PC-3 (cell line): ENCODE measurements at regions of chr14 and their contacts with region 1.

Region 1: GRCh38 chr14:55707365-55707804 is 127.4 kb downstream of the KTN1 start:
- DNase-seq: peak; percentile 91
- ATAC-seq: peak; percentile 72
- H3K4me3 ChIP-seq: no peak overlapping the region
- H3K27ac ChIP-seq: no peak overlapping the region
- H3K4me1 ChIP-seq: peaks cover 19% of the 10 kb centered on the region
- H3K27me3 ChIP-seq: no peaks in the 10 kb centered on the region
- CTCF ChIP-seq: peak; percentile 99

Region 2: DNA sequence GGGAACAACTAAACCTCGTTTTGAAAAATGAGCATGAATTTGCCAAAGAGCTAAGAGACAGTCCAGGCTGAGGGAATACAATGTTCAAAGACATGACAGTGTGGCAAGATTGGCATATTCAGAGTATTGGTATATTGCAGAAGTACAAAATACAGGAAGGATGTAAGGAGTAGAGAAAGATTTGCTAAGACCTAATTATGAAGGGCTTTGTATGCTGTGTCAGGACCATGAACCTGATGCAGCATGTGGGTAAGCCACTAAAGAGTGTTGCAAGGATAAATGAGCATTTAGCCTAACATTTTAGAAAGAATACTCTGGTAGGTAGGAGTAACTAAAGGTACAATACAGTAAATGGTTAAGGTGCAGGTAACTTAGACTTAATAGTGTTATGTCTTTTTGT is 62.2 kb before region 1 on chr14:
- CTCF ChIA-PET with region 1: no interaction called
- POLR2A ChIA-PET with region 1: no interaction called
- intact Hi-C with region 1: no loop called
- DNase-seq: no peak
- ATAC-seq: no peak
- H3K4me3 ChIP-seq: no peak overlapping the region
- H3K27ac ChIP-seq: no peak overlapping the region
- H3K4me1 ChIP-seq: no peaks in the 10 kb centered on the region
- H3K27me3 ChIP-seq: no peaks in the 10 kb centered on the region
- CTCF ChIP-seq: no peak

Region 3: GRCh38 chr14:55731881-55732498 is 24.6 kb after region 1 on chr14:
- CTCF ChIA-PET with region 1: no interaction called
- POLR2A ChIA-PET with region 1: no interaction called
- intact Hi-C with region 1: loop called (anchors 2 kb)
- DNase-seq: peak; percentile 80
- ATAC-seq: peak; percentile 57
- H3K4me3 ChIP-seq: no peak overlapping the region
- H3K27ac ChIP-seq: no peak overlapping the region
- H3K4me1 ChIP-seq: peaks cover 11% of the 10 kb centered on the region
- H3K27me3 ChIP-seq: no peaks in the 10 kb centered on the region
- CTCF ChIP-seq: peak; percentile 98

Region 4: DNA sequence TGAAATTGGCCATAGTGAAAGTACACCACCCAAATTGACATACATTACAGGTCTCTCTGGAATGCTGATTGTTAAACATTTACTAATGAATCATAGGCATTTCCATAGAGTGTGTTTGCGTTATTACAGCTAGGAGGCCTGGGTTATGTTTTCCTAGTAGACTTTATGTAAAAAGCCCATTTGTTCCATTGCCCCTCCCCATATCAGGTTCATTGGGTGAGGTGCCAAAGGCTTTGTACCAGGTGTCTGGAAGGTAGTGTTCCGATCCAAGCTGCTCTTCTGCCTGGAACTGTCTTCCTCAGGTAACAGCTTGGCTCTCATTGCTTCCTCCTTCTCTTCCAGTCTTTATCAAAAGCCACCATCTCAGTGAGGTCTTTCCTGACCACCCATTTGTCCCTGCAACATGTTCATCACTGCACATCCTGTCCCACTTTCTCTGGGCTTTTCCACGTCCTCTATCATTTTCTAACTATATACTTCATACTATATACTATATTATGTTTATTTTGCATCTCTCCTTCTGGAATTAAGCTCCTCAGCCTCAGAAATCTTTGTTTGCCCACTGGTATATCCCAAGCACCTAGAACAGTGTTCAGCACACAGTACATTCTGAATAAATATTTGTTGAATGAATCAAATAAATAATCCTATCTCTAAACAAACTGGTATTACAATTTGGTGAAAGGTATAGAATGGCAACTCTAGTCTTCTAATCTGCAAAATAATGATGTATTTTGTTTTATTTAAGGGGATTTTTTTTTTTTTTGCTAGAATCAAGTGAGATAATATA is 124.9 kb after region 1 on chr14:
- CTCF ChIA-PET with region 1: no interaction called
- POLR2A ChIA-PET with region 1: no interaction called
- intact Hi-C with region 1: loop called (anchors 1 kb)
- DNase-seq: peak; percentile 100
- ATAC-seq: peak; percentile 96
- H3K4me3 ChIP-seq: peak overlapping the region; percentile 31
- H3K27ac ChIP-seq: peak overlapping the region; percentile 91
- H3K4me1 ChIP-seq: peaks cover 40% of the 10 kb centered on the region
- H3K27me3 ChIP-seq: no peaks in the 10 kb centered on the region
- CTCF ChIP-seq: no peak

Region 5: GRCh38 chr14:56117765-56118610 is 410.6 kb after region 1 on chr14 and contains the start of gene PELI2:
- CTCF ChIA-PET with region 1: no interaction called
- POLR2A ChIA-PET with region 1: no interaction called
- intact Hi-C with region 1: loop called (anchors 10 kb)
- DNase-seq: peak; percentile 50
- ATAC-seq: peak; percentile 80
- H3K4me3 ChIP-seq: peak within 1 kb of the TSS; percentile 79
- H3K27ac ChIP-seq: no peak within 1 kb of the TSS
- H3K4me1 ChIP-seq: peaks cover 9% of the 10 kb centered on the region
- H3K27me3 ChIP-seq: peaks cover 90% of the 10 kb centered on the region
- CTCF ChIP-seq: no peak
- total RNA-seq, gene PELI2: 0.11 and 0.23 TPM in 2 replicates

Region 6: DNA sequence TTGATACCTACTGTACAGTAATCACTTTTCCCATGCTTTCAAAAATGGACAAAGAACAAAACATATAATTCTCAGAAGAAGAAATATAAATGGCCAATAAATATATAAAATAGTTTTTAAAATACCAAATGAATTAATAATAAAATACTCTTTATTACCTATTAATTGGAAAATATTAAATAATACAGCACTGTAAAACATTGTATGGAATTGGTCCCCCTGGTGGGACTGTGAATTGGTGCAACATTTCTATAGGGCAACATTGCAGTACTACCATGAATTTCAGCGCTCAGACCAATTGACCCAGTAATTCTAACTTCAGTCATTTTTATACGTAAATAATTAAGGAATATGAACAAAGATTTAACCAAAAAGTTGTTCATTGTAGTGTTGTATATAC is 573.5 kb after region 1 on chr14:
- CTCF ChIA-PET with region 1: no interaction called
- POLR2A ChIA-PET with region 1: no interaction called
- intact Hi-C with region 1: loop called (anchors 2 kb)
- DNase-seq: peak; percentile 46
- ATAC-seq: peak; percentile 45; the same call in 1 of the 2 replicates
- H3K4me3 ChIP-seq: no peak overlapping the region
- H3K27ac ChIP-seq: no peak overlapping the region
- H3K4me1 ChIP-seq: no peaks in the 10 kb centered on the region
- H3K27me3 ChIP-seq: peaks cover 47% of the 10 kb centered on the region
- CTCF ChIP-seq: peak; percentile 49

Region 7: GRCh38 chr14:56422703-56423213 is 715.4 kb after region 1 on chr14:
- CTCF ChIA-PET with region 1: interaction called, 4 read pairs
- POLR2A ChIA-PET with region 1: no interaction called
- intact Hi-C with region 1: loop called (anchors 1 kb)
- DNase-seq: peak; percentile 79
- ATAC-seq: peak; percentile 92
- H3K4me3 ChIP-seq: no peak overlapping the region
- H3K27ac ChIP-seq: no peak overlapping the region
- H3K4me1 ChIP-seq: no peaks in the 10 kb centered on the region
- H3K27me3 ChIP-seq: peaks cover 62% of the 10 kb centered on the region
- CTCF ChIP-seq: peak; percentile 93

Region 8: GRCh38 chr14:56491299-56492285 is 784.2 kb after region 1 on chr14:
- CTCF ChIA-PET with region 1: interaction called, 3 read pairs
- POLR2A ChIA-PET with region 1: no interaction called
- intact Hi-C with region 1: loop called (anchors 5 kb)
- DNase-seq: peak; percentile 87
- ATAC-seq: peak; percentile 72
- H3K4me3 ChIP-seq: no peak overlapping the region
- H3K27ac ChIP-seq: no peak overlapping the region
- H3K4me1 ChIP-seq: no peaks in the 10 kb centered on the region
- H3K27me3 ChIP-seq: peaks cover 45% of the 10 kb centered on the region
- CTCF ChIP-seq: peak; percentile 97